Esophagus muscularis mucosa (tissue), 4 donors: ENCODE measurements at regions of chr10 and their contacts with region 1.

Region 1: DNA sequence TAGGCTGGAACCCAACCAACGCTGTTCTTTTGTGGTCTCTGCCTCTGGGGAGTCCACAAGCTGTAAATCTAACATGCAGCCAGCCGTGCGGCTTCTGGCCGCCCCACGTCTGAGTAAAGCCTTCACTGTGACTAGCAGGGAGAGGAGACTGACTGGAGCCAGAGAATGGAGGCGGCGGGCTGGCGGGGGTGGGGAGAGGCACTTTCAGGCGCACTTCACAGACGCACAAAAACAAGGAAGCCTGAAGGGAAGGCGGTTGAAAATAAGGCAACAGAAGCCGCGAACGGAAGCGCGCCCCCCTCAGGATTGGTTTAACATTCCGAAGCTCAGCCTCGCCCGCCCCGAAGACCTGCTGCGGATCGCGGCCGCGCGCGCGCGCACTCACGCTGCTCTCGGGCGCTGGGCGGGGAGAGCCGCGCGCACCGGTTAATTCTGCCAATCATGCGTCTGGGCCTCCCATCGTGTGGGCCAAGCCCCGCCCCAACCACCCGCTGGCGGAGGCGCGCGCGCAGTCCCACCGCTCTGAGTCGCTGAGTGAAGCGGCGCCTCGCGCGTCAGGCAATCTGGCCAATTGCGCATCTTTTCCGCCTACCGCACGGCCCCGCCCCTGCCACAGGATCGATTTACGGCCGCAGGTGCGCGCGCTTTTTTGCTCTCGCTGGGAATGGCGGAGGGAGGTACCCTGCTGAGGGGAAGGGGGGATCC is at the start of gene SFR1:
- DNase-seq: peak; percentile 99
- H3K4me3 ChIP-seq: peak within 1 kb of the TSS; percentile 72 to 83 (median 80)
- H3K27ac ChIP-seq: peak within 1 kb of the TSS; percentile 93 to 99 (median 98)
- H3K4me1 ChIP-seq: peaks cover 5 to 22% (median 20%) of the 10 kb centered on the region in 4 donors
- H3K27me3 ChIP-seq: no peaks in the 10 kb centered on the region
- CTCF ChIP-seq: peak; percentile 49 to 62 (median 55)
- EP300 ChIP-seq: no peak
- POLR2A ChIP-seq: peak; percentile 24
- total RNA-seq, gene SFR1: 4.9 to 9.1 (median 7.8) TPM

Region 2: GRCh38 chr10:103888113-103888841 is 233.4 kb before region 1 on chr10:
- intact Hi-C with region 1: loop called (anchors 5 kb)
- DNase-seq: no peak
- H3K4me3 ChIP-seq: no peak overlapping the region
- H3K27ac ChIP-seq: peak overlapping the region; percentile 60 to 82 (median 74)
- H3K4me1 ChIP-seq: peaks cover 27 to 50% (median 37%) of the 10 kb centered on the region in 4 donors
- H3K27me3 ChIP-seq: no peaks in the 10 kb centered on the region
- CTCF ChIP-seq: peak; percentile 85 to 87 (median 87)
- EP300 ChIP-seq: no peak
- POLR2A ChIP-seq: no peak

Region 3: GRCh38 chr10:103966671-103967447 is 154.8 kb before region 1 on chr10 and contains the start of gene SLK:
- intact Hi-C with region 1: loop called (anchors 5 kb)
- DNase-seq: no peak
- H3K4me3 ChIP-seq: peak within 1 kb of the TSS; percentile 71 to 97 (median 87)
- H3K27ac ChIP-seq: peak within 1 kb of the TSS; percentile 98 to 99 (median 99)
- H3K4me1 ChIP-seq: peaks cover 15 to 44% (median 40%) of the 10 kb centered on the region in 4 donors
- H3K27me3 ChIP-seq: no peaks in the 10 kb centered on the region
- CTCF ChIP-seq: no peak
- EP300 ChIP-seq: no peak
- POLR2A ChIP-seq: peak; percentile 37
- total RNA-seq, gene SLK: 83.1 to 105 (median 102) TPM

Region 4: GRCh38 chr10:104045151-104046089 is 76.3 kb before region 1 on chr10:
- intact Hi-C with region 1: loop called (anchors 5 kb)
- DNase-seq: no peak
- H3K4me3 ChIP-seq: no peak overlapping the region
- H3K27ac ChIP-seq: no peak overlapping the region
- H3K4me1 ChIP-seq: peaks cover 0 to 3% (median 0%) of the 10 kb centered on the region in 4 donors
- H3K27me3 ChIP-seq: no peaks in the 10 kb centered on the region
- CTCF ChIP-seq: peak; percentile 26 to 55 (median 39)
- EP300 ChIP-seq: no peak
- POLR2A ChIP-seq: no peak

Region 5: GRCh38 chr10:104076743-104077160 is 44.9 kb before region 1 on chr10:
- intact Hi-C with region 1: no loop called
- DNase-seq: no peak
- H3K4me3 ChIP-seq: no peak overlapping the region
- H3K27ac ChIP-seq: no peak overlapping the region
- H3K4me1 ChIP-seq: peaks cover 0 to 5% (median 0%) of the 10 kb centered on the region in 4 donors
- H3K27me3 ChIP-seq: no peaks in the 10 kb centered on the region
- CTCF ChIP-seq: no peak
- EP300 ChIP-seq: no peak
- POLR2A ChIP-seq: no peak

Region 6: GRCh38 chr10:104268716-104269645 is 147.3 kb after region 1 on chr10 and contains the start of gene GSTO2:
- intact Hi-C with region 1: loop called (anchors 5 kb)
- DNase-seq: peak; percentile 99
- H3K4me3 ChIP-seq: peak within 1 kb of the TSS; percentile 69 to 93 (median 84)
- H3K27ac ChIP-seq: peak within 1 kb of the TSS; percentile 84 to 94 (median 90)
- H3K4me1 ChIP-seq: peaks cover 9 to 21% (median 17%) of the 10 kb centered on the region in 4 donors
- H3K27me3 ChIP-seq: no peaks in the 10 kb centered on the region
- CTCF ChIP-seq: peak in 1 of 3 experiments; percentile 5
- EP300 ChIP-seq: no peak
- POLR2A ChIP-seq: peak; percentile 74
- total RNA-seq, gene GSTO2: 0.42 to 0.99 (median 0.63) TPM